Endothelial cell of umbilical vein (primary cell): ENCODE measurements at regions of chr3 and their contacts with region 1.

Region 1: DNA sequence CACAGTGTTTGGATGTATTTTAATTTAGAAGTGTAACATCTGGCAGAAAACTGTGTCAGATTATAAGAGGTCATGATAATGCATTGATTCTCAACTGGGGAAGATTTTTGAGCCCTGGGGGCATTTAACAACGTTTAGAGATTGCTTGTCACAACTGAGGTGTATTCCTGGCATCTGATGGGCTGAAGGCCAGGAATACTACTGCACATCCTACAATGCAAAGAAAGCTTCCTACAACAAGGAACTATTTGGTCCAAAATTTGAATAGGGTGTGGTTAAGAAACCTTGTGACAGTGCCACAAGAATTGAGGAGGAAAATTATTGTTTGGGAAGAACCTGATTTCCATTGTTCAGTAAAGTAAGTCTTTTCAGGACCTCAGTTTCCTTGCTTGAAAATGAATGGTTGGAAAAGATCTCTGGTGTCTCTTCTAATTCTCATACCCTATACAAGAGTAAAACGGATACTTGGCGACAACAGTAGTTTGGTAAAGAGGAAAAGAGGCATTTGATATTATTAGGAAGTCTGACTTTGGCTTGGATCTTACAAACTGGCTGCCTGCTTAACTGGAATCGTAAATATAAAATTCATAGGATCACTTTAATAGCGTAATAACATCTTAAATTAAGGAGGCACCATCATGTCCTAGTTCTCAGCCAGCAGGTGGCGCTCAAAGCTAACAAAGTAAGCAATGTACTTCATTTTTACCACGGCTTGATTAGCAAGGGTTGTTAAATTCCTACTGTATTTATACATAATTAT is 4.3 kb downstream of the DAZL start:
- DNase-seq: peak; percentile 80
- H3K4me3 ChIP-seq: no peak overlapping the region
- H3K27ac ChIP-seq: no peak overlapping the region
- H3K4me1 ChIP-seq: no peaks in the 10 kb centered on the region
- H3K27me3 ChIP-seq: peaks cover 0 to 6% of the 10 kb centered on the region in 2 experiments
- CTCF ChIP-seq: peak; percentile 56 to 61
- POLR2A ChIP-seq: no peak

Region 2: GRCh38 chr3:16533928-16534574 is 66.9 kb before region 1 on chr3:
- CTCF ChIA-PET with region 1: no interaction called
- POLR2A ChIA-PET with region 1: no interaction called
- dilution Hi-C with region 1: no loop called
- intact Hi-C with region 1: no loop called
- DNase-seq: no peak
- H3K4me3 ChIP-seq: no peak overlapping the region
- H3K27ac ChIP-seq: no peak overlapping the region
- H3K4me1 ChIP-seq: no peaks in the 10 kb centered on the region
- H3K27me3 ChIP-seq: peaks cover 16 to 25% of the 10 kb centered on the region in 2 experiments
- CTCF ChIP-seq: no peak
- POLR2A ChIP-seq: no peak

Region 3: GRCh38 chr3:17032407-17033034 is 431.6 kb after region 1 on chr3:
- CTCF ChIA-PET with region 1: no interaction called
- POLR2A ChIA-PET with region 1: no interaction called
- dilution Hi-C with region 1: no loop called
- intact Hi-C with region 1: loop called (anchors 1 kb)
- DNase-seq: peak; percentile 58
- H3K4me3 ChIP-seq: no peak overlapping the region
- H3K27ac ChIP-seq: no peak overlapping the region
- H3K4me1 ChIP-seq: no peaks in the 10 kb centered on the region
- H3K27me3 ChIP-seq: no peaks in the 10 kb centered on the region
- CTCF ChIP-seq: peak; percentile 35 to 55
- POLR2A ChIP-seq: no peak

Region 4: GRCh38 chr3:17227472-17227871 is 626.5 kb after region 1 on chr3:
- CTCF ChIA-PET with region 1: interaction called, 20 read pairs
- POLR2A ChIA-PET with region 1: no interaction called
- dilution Hi-C with region 1: no loop called
- intact Hi-C with region 1: no loop called
- DNase-seq: no peak
- H3K4me3 ChIP-seq: no peak overlapping the region
- H3K27ac ChIP-seq: no peak overlapping the region
- H3K4me1 ChIP-seq: no peaks in the 10 kb centered on the region
- H3K27me3 ChIP-seq: no peaks in the 10 kb centered on the region
- CTCF ChIP-seq: no peak
- POLR2A ChIP-seq: no peak

Region 5: DNA sequence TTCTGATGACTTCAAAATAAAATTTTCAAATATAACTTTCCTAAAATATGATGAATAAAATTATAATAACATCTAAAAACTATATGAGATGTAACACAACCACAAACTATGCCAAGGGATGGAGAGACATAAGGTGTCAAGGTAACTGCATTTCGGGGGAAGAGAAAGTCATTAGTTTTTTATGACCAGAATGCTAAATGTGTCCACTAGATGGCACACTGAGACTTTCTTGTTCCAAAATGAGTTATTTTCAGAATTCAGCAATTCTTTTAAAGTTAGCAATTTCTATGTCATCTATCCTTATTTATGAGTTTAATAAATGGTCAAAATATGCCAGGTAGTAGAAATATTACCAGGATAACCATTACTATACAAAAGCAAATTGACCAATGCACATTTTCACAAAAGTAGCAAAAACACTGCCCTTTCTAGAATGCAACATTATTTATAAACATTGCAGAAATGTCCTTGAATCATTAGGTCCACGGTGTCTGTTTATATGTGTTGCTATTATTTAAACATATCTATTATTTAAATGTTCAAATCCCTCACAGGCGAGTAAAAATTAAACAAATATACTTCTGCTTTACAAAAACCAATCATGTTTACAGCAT is 658.0 kb after region 1 on chr3:
- CTCF ChIA-PET with region 1: interaction called, 5 read pairs
- POLR2A ChIA-PET with region 1: no interaction called
- dilution Hi-C with region 1: no loop called
- intact Hi-C with region 1: loop called (anchors 1 kb)
- DNase-seq: peak; percentile 51
- H3K4me3 ChIP-seq: no peak overlapping the region
- H3K27ac ChIP-seq: no peak overlapping the region
- H3K4me1 ChIP-seq: no peaks in the 10 kb centered on the region
- H3K27me3 ChIP-seq: no peaks in the 10 kb centered on the region
- CTCF ChIP-seq: peak; percentile 55
- POLR2A ChIP-seq: no peak